ENCODE measurements at regions of chr21 and their contacts with region 1.

Region 1: DNA sequence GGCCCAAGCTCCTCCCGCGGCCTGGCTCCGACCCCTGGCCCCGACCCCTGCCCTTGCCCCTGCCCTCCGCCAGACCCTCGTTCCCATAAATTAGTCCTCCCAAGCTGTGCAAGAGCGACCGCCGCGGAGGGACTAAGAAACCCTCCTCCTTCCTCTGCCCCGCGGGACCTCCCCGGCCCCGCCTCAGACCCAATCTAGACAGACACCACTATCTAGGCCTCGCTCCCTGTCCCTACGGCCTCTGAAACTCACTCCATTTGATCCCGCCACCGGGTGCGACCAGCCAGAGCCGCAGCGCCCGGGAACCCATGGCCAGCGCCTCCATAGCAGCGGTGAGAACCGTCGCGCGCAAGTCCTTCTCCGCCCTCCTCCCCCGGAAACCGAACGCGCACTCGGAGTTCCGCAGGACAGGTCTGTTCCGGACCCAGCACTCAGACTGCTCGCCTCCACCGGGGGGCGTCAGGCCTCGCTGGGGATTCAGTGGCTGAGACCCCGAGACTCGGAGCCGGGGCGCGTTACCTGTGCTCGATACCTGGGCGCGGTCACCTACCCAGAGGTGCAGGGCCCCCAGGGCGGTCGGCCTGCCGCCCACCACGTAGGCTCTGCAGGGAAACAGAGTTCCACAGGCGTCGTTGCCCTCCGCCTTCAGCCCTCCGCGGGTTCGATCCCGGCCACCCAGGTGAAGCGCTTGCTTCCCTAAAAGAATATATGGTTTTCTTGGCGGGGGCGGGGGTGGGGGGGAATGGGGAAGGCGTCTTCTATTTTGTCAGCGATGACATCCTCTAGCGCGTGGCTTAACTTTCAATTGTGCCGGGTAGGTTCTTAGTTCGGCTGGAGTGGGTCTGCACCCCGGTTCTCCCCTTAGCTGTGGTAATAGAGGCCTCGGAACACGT is at the start of gene MRPL39:
- DNase-seq: peak; percentile 93
- ATAC-seq: peak; percentile 99
- total RNA-seq, gene MRPL39: 56.5 TPM

Region 2: DNA sequence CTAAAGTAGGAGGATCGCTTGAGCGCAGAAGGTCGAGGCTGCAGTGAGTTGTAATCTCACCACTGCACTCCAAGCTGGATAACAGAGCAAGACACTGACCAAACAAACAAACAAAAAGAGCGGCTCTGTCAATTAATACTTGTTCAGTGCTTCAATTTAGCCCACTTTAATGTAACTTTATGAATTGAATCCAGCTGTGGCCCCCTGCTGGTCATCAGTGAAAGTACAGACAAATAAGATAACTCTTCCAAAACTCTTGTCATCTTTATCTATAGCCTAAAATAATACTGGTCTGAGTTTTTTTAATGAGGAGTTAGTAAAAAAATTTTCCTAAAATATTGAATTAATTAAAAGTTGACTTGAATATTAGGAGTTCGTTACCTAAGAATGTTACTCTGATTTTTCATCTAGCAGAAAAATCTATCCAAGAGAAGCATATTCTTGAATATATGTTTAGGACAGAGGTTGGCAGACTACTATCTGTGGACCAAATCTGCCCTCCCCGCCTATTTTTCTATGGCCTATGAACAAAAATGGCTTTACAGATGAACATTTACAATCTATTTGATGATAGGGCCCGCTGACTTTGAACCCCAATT is 101.2 kb after region 1 on chr21:
- intact Hi-C with region 1: loop called (anchors 1 kb)
- DNase-seq: peak; percentile 41
- ATAC-seq: peak; percentile 51

Region 3: DNA sequence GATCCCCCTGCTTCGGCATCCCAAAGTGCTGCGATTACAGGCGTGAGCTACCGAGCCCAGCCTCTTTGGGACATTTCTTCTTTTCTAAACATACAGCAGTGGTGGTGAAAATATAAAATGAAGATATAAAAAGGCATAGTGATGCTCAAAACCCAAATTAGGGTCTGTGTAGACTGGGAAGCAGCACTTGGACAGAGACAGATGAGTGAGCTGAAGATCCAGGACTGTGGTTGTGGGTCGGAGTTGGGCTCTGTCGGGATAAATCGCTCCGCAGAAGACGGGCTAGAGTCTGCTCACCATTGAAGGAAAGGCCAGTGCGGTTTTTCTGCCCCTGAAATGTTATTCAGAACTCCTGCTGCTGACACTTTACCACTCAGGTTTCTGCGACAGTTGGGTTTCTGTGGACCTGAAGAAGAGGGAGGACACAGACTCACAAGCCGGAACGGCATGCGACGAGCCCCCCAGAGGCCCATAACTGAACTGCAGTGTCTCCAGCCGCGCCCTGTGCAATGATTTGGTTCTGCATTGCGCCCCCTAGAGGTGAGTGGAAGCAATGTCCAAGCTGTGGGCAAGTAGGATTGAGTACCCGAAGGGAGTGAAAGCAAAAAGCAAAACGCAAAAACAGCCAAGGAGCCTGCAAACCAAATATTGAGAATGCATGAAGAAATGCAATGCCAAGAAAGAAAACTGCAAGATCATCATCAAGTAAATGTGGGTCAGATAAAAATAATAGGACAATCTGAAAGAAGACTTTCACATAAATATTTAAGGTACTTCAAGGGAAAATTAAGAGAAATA is 194.0 kb after region 1 on chr21:
- intact Hi-C with region 1: loop called (anchors 10 kb)
- DNase-seq: peak; percentile 89
- ATAC-seq: peak; percentile 96